CD8-positive, alpha-beta T cell (primary cell): ENCODE measurements at regions of chr3 and their contacts with region 1.

Region 1: GRCh38 chr3:128617557-128618397 is 32.8 kb downstream of the RPN1 start:
- DNase-seq: peak; percentile 97 to 100 (median 99)
- ATAC-seq: peak; percentile 95
- H3K4me3 ChIP-seq: peak overlapping the region; percentile 70 to 85
- H3K4me3 Mint-ChIP-seq: peak overlapping the region; percentile 93
- H3K27ac ChIP-seq: peak overlapping the region; percentile 78 to 88
- H3K27ac Mint-ChIP-seq: peak overlapping the region; percentile 96
- H3K4me1 ChIP-seq: peaks cover 16% of the 10 kb centered on the region
- H3K4me1 Mint-ChIP-seq: peaks cover 28% of the 10 kb centered on the region
- H3K27me3 ChIP-seq: no peaks in the 10 kb centered on the region
- H3K27me3 Mint-ChIP-seq: no peaks in the 10 kb centered on the region
- CTCF ChIP-seq: peak; percentile 92

Region 2: GRCh38 chr3:128051837-128052594 is 565.8 kb before region 1 on chr3 and contains the start of gene SEC61A1:
- CTCF ChIA-PET with region 1: no interaction called
- POLR2A ChIA-PET with region 1: no interaction called
- intact Hi-C with region 1: loop called in 1 of 2 experiments (anchors 1 kb)
- DNase-seq: peak; percentile 87 to 97 (median 95)
- ATAC-seq: peak; percentile 93
- H3K4me3 ChIP-seq: peak within 1 kb of the TSS; percentile 92 to 95
- H3K4me3 Mint-ChIP-seq: peak within 1 kb of the TSS; percentile 99
- H3K27ac ChIP-seq: peak within 1 kb of the TSS; percentile 78 to 85
- H3K27ac Mint-ChIP-seq: peak within 1 kb of the TSS; percentile 98
- H3K4me1 ChIP-seq: peaks cover 35% of the 10 kb centered on the region
- H3K4me1 Mint-ChIP-seq: peaks cover 43% of the 10 kb centered on the region
- H3K27me3 ChIP-seq: no peaks in the 10 kb centered on the region
- H3K27me3 Mint-ChIP-seq: no peaks in the 10 kb centered on the region
- CTCF ChIP-seq: no peak
- total RNA-seq, gene SEC61A1: 125 to 131 TPM

Region 3: GRCh38 chr3:128607710-128608048 is 10.1 kb before region 1 on chr3:
- CTCF ChIA-PET with region 1: interaction called, 24 read pairs
- POLR2A ChIA-PET with region 1: no interaction called
- intact Hi-C with region 1: no loop called
- DNase-seq: no peak
- ATAC-seq: no peak
- H3K4me3 ChIP-seq: peak overlapping the region; percentile 57 to 76
- H3K4me3 Mint-ChIP-seq: no peak overlapping the region
- H3K27ac ChIP-seq: no peak overlapping the region
- H3K27ac Mint-ChIP-seq: no peak overlapping the region
- H3K4me1 ChIP-seq: peaks cover 5% of the 10 kb centered on the region
- H3K4me1 Mint-ChIP-seq: peaks cover 4% of the 10 kb centered on the region
- H3K27me3 ChIP-seq: peaks cover 0 to 2% of the 10 kb centered on the region in 2 experiments
- H3K27me3 Mint-ChIP-seq: peaks cover 3% of the 10 kb centered on the region
- CTCF ChIP-seq: no peak

Region 4: DNA sequence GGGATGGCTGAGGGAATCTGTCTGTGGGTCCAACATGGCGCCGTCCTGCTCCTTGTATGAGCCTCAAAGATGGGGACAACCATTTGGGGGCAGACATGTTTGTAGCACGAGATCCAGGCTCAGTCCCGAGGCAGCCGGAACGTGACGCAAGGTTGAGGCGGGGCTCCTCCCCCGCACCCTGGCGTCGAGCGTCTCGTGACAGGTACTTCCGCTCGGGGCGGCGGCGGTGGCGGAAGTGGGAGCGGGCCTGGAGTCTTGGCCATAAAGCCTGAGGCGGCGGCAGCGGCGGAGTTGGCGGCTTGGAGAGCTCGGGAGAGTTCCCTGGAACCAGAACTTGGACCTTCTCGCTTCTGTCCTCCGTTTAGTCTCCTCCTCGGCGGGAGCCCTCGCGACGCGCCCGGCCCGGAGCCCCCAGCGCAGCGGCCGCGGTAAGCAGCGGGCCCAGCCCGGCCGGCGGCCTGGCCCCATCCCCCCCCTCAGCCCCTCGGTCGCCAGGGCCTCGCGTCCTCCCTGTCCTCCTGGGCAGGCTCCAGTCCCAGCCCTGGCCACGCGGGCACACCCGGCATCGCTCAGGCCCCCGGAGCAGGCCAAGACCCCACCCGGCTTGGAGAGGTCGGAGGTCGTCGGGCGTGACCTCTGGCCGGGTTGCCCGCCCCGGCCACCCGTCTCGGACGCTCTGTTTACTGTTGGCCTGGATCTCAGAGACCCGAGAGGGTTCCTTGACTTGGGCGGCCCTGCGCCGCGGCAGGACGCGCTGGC is 108.3 kb after region 1 on chr3 and contains the start of gene RAB7A:
- CTCF ChIA-PET with region 1: no interaction called
- POLR2A ChIA-PET with region 1: no interaction called
- intact Hi-C with region 1: loop called (anchors 1 kb)
- DNase-seq: peak; percentile 95 to 99 (median 97)
- ATAC-seq: peak; percentile 98
- H3K4me3 ChIP-seq: peak within 1 kb of the TSS; percentile 82 to 83
- H3K4me3 Mint-ChIP-seq: peak within 1 kb of the TSS; percentile 97
- H3K27ac ChIP-seq: peak within 1 kb of the TSS; percentile 92
- H3K27ac Mint-ChIP-seq: peak within 1 kb of the TSS; percentile 95
- H3K4me1 ChIP-seq: peaks cover 41% of the 10 kb centered on the region
- H3K4me1 Mint-ChIP-seq: peaks cover 53% of the 10 kb centered on the region
- H3K27me3 ChIP-seq: no peaks in the 10 kb centered on the region
- H3K27me3 Mint-ChIP-seq: no peaks in the 10 kb centered on the region
- CTCF ChIP-seq: no peak
- total RNA-seq, gene RAB7A: 130 to 134 TPM

Region 5: DNA sequence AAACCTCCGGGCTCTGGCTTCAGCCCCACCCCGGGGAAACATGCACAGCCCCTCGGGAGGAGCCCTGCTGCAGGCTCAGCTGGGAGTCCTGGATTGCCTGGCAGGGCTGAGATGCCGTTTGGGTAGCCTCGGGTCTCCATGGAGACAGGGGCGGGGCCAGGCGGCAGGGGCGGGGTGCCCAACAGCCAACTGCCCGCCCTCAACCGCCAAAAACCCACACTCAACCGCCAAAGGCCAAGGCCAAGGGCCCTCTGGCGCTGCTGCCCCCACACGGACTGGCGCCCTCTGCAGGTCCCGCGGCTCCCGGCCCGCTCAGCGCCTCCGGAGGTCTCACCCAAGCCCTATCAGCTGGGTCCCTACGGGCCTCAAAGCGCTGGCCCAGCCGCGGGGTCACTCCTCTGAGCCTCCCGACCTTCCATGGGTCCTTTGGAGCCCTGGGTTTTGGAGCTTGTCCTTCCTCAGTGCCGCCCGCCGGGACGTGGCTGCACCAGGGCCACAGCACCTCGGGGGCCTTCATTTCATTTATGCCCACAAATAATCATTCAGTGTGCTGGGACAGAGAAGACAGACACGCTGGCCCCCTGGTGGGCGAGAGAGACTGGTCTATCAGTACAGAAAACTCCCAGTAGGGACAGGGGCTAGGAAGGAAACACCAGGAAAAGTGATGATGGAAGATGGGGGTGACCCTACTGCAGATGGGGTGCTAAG is 228.2 kb after region 1 on chr3:
- CTCF ChIA-PET with region 1: interaction called, 15 read pairs
- POLR2A ChIA-PET with region 1: no interaction called
- intact Hi-C with region 1: loop called (anchors 1 kb)
- DNase-seq: peak; percentile 58 to 85 (median 79)
- ATAC-seq: peak; percentile 82
- H3K4me3 ChIP-seq: peak overlapping the region; percentile 51 to 74
- H3K4me3 Mint-ChIP-seq: peak overlapping the region; percentile 80
- H3K27ac ChIP-seq: peak overlapping the region; percentile 17 to 45
- H3K27ac Mint-ChIP-seq: peak overlapping the region; percentile 78
- H3K4me1 ChIP-seq: peaks cover 19% of the 10 kb centered on the region
- H3K4me1 Mint-ChIP-seq: peaks cover 9% of the 10 kb centered on the region
- H3K27me3 ChIP-seq: no peaks in the 10 kb centered on the region
- H3K27me3 Mint-ChIP-seq: no peaks in the 10 kb centered on the region
- CTCF ChIP-seq: peak; percentile 75

Region 6: GRCh38 chr3:129445471-129445870 is 827.7 kb after region 1 on chr3:
- CTCF ChIA-PET with region 1: interaction called, 4 read pairs
- POLR2A ChIA-PET with region 1: no interaction called
- intact Hi-C with region 1: loop called in 1 of 2 experiments (anchors 2 kb)
- DNase-seq: no peak
- ATAC-seq: no peak
- H3K4me3 ChIP-seq: no peak overlapping the region
- H3K4me3 Mint-ChIP-seq: no peak overlapping the region
- H3K27ac ChIP-seq: no peak overlapping the region
- H3K27ac Mint-ChIP-seq: no peak overlapping the region
- H3K4me1 ChIP-seq: peaks cover 11% of the 10 kb centered on the region
- H3K4me1 Mint-ChIP-seq: peaks cover 22% of the 10 kb centered on the region
- H3K27me3 ChIP-seq: no peaks in the 10 kb centered on the region
- H3K27me3 Mint-ChIP-seq: no peaks in the 10 kb centered on the region
- CTCF ChIP-seq: no peak